ENCODE measurements at regions of chr3 and their contacts with region 1.

Region 1: GRCh38 chr3:134473868-134474546 is 11.8 kb downstream of the ANAPC13 start:
- DNase-seq: peak; percentile 81 to 82
- H3K4me3 ChIP-seq: no peak overlapping the region
- H3K27ac ChIP-seq: peak overlapping the region; percentile 26
- H3K4me1 ChIP-seq: peaks cover 41% of the 10 kb centered on the region
- H3K27me3 ChIP-seq: no peaks in the 10 kb centered on the region
- CTCF ChIP-seq: peak; percentile 97

Region 2: DNA sequence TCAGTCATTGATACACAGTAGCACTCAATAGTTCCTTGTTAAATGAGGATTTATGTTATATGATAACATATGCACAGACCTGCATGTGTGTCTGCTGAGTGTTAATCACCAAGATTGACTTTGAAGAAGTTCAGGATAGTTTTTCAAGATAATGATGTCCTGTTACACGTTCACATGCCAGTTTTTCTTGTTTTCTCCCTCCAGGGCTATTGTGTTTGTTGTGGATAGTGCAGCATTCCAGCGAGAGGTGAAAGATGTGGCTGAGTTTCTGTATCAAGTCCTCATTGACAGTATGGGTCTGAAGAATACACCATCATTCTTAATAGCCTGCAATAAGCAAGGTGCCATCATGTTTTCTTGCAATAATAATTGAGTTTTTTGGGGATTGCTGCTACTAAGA is 658.6 kb before region 1 on chr3:
- CTCF ChIA-PET with region 1: no interaction called
- POLR2A ChIA-PET with region 1: interaction called, 20 read pairs
- intact Hi-C with region 1: loop called (anchors 5 kb)
- DNase-seq: no peak
- H3K4me3 ChIP-seq: no peak overlapping the region
- H3K27ac ChIP-seq: no peak overlapping the region
- H3K4me1 ChIP-seq: no peaks in the 10 kb centered on the region
- H3K27me3 ChIP-seq: no peaks in the 10 kb centered on the region
- CTCF ChIP-seq: no peak

Region 3: DNA sequence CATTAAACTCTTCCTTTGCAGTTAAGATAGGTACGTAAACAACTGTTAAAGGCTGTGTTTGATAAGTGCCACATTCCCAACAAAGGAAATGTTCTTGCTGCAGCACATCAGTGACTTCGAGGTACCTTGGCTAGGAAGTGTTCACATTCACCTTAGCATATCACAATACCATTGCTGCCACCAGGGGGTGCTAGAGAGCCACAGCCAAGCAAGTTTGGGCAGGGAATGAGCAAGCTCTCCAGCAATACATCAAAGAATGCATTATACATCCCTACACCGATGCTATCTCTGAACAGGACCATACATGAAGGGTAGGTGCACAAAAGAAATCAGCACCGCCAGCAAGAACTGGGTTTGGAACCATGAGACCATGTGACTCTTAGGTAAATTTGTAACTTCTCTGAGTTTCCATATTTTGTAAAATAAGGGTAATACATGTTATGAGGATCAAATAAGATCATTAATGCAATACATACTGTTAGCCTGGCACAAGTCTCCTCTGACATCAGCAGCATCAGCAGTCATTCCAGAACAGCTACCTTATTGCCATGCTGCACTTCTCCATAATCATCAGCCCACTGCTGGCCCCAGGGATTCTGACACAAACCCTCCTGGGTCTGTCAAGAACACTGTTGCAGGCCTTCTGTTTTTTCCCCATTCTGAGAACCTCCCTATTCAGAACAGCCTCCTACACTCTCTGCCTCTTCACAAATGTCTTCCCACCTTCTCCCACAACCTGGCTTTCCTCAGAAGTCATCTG is 260.9 kb before region 1 on chr3:
- CTCF ChIA-PET with region 1: interaction called, 7 read pairs
- POLR2A ChIA-PET with region 1: no interaction called
- intact Hi-C with region 1: loop called (anchors 1 kb)
- DNase-seq: peak; percentile 71 to 90
- H3K4me3 ChIP-seq: no peak overlapping the region
- H3K27ac ChIP-seq: no peak overlapping the region
- H3K4me1 ChIP-seq: no peaks in the 10 kb centered on the region
- H3K27me3 ChIP-seq: no peaks in the 10 kb centered on the region
- CTCF ChIP-seq: peak; percentile 95

Region 4: GRCh38 chr3:134357261-134358184 is 116.5 kb before region 1 on chr3:
- CTCF ChIA-PET with region 1: interaction called, 9 read pairs
- POLR2A ChIA-PET with region 1: interaction called, 5 read pairs
- intact Hi-C with region 1: loop called (anchors 1 kb)
- DNase-seq: peak; percentile 91 to 98
- H3K4me3 ChIP-seq: peak overlapping the region; percentile 20; the same call in 1 of the 2 replicates
- H3K27ac ChIP-seq: peak overlapping the region; percentile 100
- H3K4me1 ChIP-seq: peaks cover 99% of the 10 kb centered on the region
- H3K27me3 ChIP-seq: no peaks in the 10 kb centered on the region
- CTCF ChIP-seq: no peak

Region 5: GRCh38 chr3:134381827-134382442 is 92.1 kb before region 1 on chr3:
- CTCF ChIA-PET with region 1: no interaction called
- POLR2A ChIA-PET with region 1: no interaction called
- intact Hi-C with region 1: loop called (anchors 1 kb)
- DNase-seq: peak; percentile 97 to 98
- H3K4me3 ChIP-seq: no peak overlapping the region; the same call in 1 of the 2 replicates
- H3K27ac ChIP-seq: peak overlapping the region; percentile 74
- H3K4me1 ChIP-seq: peaks cover 45% of the 10 kb centered on the region
- H3K27me3 ChIP-seq: no peaks in the 10 kb centered on the region
- CTCF ChIP-seq: no peak

Region 6: DNA sequence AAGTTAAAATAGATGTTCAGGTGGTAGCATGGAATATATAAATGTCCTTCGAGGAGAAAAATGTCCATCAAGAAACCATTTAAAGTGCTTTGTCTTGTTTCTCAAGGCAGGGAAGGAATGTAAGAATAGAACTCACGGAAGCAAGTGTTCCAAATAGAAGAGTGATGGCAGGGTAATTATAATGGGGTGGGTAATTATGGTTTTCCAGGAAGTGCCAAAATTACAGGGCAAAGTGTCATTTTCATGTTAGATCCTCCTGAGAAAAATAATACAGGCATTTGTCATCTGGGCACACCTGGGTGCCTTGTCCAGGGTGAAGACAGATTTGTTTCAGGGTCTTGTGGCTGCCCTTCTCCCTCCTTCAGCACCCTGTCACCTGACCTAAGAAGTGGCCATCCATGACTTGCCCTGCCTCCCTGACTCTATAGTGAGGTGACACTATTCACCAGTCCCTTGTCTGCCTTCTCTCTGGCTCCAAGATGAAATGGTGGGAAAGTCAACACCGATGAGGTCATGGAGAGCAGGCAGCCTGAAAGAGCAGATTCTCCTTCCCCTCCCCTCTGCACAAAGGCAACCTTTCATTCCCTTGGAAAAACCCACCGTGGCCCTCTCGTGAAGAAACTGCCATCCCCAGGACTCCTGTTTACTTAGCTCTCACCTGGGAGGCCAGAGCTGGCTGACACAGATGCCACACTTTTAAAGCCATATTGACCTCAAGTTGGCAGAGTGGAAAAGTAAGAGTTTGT is 54.6 kb before region 1 on chr3:
- CTCF ChIA-PET with region 1: no interaction called
- POLR2A ChIA-PET with region 1: no interaction called
- intact Hi-C with region 1: no loop called
- DNase-seq: peak; percentile 12 to 41
- H3K4me3 ChIP-seq: no peak overlapping the region
- H3K27ac ChIP-seq: no peak overlapping the region
- H3K4me1 ChIP-seq: peaks cover 19% of the 10 kb centered on the region
- H3K27me3 ChIP-seq: no peaks in the 10 kb centered on the region
- CTCF ChIP-seq: no peak

Region 7: DNA sequence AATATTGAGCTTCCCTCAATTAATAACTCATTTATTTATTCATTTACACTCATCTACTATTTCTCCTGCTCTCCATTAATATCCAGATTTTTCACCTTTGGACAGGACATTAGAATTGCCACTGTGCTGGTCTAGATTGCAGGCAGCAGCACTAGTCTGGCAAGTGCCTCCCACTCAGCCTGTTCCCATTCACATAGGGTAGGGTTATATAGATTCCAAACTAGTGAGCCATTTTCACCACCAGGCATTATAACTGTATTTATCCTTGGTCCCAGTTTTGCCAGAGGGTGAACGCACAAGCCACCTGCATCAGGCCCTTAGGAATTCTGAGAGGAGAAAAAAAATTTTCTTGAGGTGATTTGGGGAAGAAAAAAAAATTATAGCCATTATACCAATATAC is 32.7 kb before region 1 on chr3:
- CTCF ChIA-PET with region 1: no interaction called
- POLR2A ChIA-PET with region 1: no interaction called
- intact Hi-C with region 1: no loop called
- DNase-seq: peak; percentile 23 to 47
- H3K4me3 ChIP-seq: no peak overlapping the region
- H3K27ac ChIP-seq: no peak overlapping the region
- H3K4me1 ChIP-seq: peaks cover 30% of the 10 kb centered on the region
- H3K27me3 ChIP-seq: no peaks in the 10 kb centered on the region
- CTCF ChIP-seq: no peak